ENCODE measurements at regions of chr1 and their contacts with region 1.

Region 1: DNA sequence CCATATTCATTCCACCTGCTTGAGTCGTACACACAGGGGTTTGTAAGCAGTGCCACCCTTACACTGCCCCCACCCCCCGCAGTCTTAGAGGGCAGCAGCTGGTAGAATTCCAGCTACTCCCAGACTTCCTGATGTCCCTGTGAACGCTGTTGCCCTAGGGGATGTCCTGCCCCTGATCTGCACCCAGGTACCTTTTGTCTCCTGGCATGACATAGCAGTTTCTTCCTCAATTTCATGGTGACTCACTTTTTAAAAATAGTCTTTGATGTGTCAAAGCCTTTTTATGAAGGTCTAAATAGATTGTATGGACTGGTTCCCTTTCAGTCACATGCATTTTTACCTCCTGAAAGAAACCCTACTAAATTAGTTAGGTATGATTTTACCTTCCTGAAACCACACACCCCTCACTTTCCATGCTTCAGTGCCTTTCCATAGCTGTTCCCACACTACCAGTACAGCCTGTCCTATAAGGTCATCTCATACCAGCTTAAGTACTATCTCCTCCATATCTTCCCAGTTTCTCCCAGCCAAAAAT is 76.4 kb downstream of the ST3GAL3 start:
- DNase-seq: peak; percentile 50 to 75
- ATAC-seq: peak; percentile 88 to 93
- H3K4me3 ChIP-seq: no peak overlapping the region
- H3K27ac ChIP-seq: peak overlapping the region; percentile 82 to 88 (median 85)
- H3K4me1 ChIP-seq: peaks cover 38 to 50% of the 10 kb centered on the region in 2 donors
- H3K27me3 ChIP-seq: no peaks in the 10 kb centered on the region
- CTCF ChIP-seq: no peak
- POLR2A ChIP-seq: peak in 1 of 2 donors; percentile 9

Region 2: GRCh38 chr1:43423672-43424550 is 359.8 kb before region 1 on chr1:
- in situ Hi-C with region 1: no loop called
- intact Hi-C with region 1: no loop called
- DNase-seq: no peak
- ATAC-seq: no peak
- H3K4me3 ChIP-seq: no peak overlapping the region
- H3K27ac ChIP-seq: no peak overlapping the region
- H3K4me1 ChIP-seq: no peaks in the 10 kb centered on the region
- H3K27me3 ChIP-seq: no peaks in the 10 kb centered on the region
- CTCF ChIP-seq: no peak
- POLR2A ChIP-seq: no peak

Region 3: DNA sequence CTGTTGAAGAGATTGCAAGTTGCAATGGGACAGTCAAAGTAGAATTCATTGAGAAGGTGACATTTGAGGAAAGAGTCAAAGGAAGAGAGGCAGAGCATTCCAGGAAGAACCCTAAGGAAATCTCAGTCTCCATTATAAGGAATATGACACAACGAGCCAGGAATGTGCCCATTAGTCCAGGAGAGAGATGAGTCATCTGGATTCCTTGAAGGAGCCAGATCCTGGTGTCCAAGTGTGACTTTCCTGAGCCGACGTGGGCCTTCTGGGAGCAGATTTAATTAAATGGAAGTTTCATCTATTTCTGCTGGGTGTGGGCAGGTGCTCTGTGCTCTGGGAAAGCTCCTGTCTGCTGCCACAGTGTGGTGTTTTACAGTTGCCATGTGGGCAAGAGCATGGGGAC is 38.3 kb after region 1 on chr1:
- in situ Hi-C with region 1: no loop called
- intact Hi-C with region 1: loop called (anchors 2 kb)
- DNase-seq: peak; percentile 51 to 56
- ATAC-seq: peak; percentile 100
- H3K4me3 ChIP-seq: no peak overlapping the region
- H3K27ac ChIP-seq: peak overlapping the region; percentile 9 to 54 (median 29)
- H3K4me1 ChIP-seq: peaks cover 12 to 19% of the 10 kb centered on the region in 2 donors
- H3K27me3 ChIP-seq: no peaks in the 10 kb centered on the region
- CTCF ChIP-seq: no peak
- POLR2A ChIP-seq: no peak

Region 4: GRCh38 chr1:43881415-43881814 is 97.7 kb after region 1 on chr1:
- in situ Hi-C with region 1: no loop called
- intact Hi-C with region 1: loop called (anchors 5 kb)
- DNase-seq: no peak
- ATAC-seq: no peak
- H3K4me3 ChIP-seq: no peak overlapping the region
- H3K27ac ChIP-seq: peak overlapping the region; percentile 52 to 77 (median 72)
- H3K4me1 ChIP-seq: peaks cover 30 to 37% of the 10 kb centered on the region in 2 donors
- H3K27me3 ChIP-seq: no peaks in the 10 kb centered on the region
- CTCF ChIP-seq: no peak
- POLR2A ChIP-seq: no peak

Region 5: GRCh38 chr1:43914576-43915505 is 131.1 kb after region 1 on chr1:
- in situ Hi-C with region 1: no loop called
- intact Hi-C with region 1: no loop called
- DNase-seq: no peak
- ATAC-seq: peak in 1 of 2 donors; percentile 53
- H3K4me3 ChIP-seq: no peak overlapping the region
- H3K27ac ChIP-seq: no peak overlapping the region
- H3K4me1 ChIP-seq: peaks cover 0 to 5% of the 10 kb centered on the region in 2 donors
- H3K27me3 ChIP-seq: no peaks in the 10 kb centered on the region
- CTCF ChIP-seq: no peak
- POLR2A ChIP-seq: no peak